ENCODE measurements at regions of chr1 and their contacts with region 1.

Region 1: GRCh38 chr1:225474986-225475820 is 47.4 kb upstream of the LBR start:
- DNase-seq: peak in 32 of 35 experiments; percentile 19 to 84 (median 56)
- ATAC-seq: peak; percentile 71 to 86 (median 76)
- H3K4me3 ChIP-seq: no peak overlapping the region
- H3K4me3 Mint-ChIP-seq: peak overlapping the region in 1 of 3 donors; percentile 80
- H3K27ac ChIP-seq: no peak overlapping the region
- H3K27ac Mint-ChIP-seq: no peak overlapping the region
- H3K4me1 ChIP-seq: peaks cover 14 to 51% of the 10 kb centered on the region in 2 experiments
- H3K4me1 Mint-ChIP-seq: peaks cover 39 to 52% (median 43%) of the 10 kb centered on the region in 3 donors
- H3K27me3 ChIP-seq: no peaks in the 10 kb centered on the region
- H3K27me3 Mint-ChIP-seq: no peaks in the 10 kb centered on the region

Region 2: DNA sequence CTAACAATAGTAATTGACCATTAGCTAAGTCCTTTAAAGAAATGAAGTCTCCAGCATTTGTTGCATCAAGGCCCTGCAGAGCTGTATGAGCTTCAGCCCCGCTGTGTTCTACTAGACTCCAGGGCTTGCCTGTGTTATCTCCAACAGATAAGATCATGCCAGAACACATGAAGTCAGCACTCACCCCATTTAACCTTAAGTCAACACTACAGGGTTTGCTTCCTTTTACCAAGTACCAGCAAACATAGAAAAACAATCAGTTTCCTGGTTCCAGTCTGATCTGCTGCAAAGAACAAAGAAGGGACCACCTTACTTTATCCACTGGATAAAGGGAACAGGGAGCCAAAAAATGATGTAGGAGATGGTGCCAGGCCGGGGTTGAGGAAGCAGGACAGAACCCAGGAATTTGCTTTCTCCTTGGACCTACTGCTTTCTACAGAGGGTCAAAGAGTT is 219.0 kb after region 1 on chr1:
- CTCF ChIA-PET with region 1: no interaction called
- POLR2A ChIA-PET with region 1: interaction called in 1 of 2 experiments, 10 read pairs
- DNase-seq: no peak
- ATAC-seq: no peak
- H3K4me3 ChIP-seq: no peak overlapping the region
- H3K4me3 Mint-ChIP-seq: no peak overlapping the region
- H3K27ac ChIP-seq: no peak overlapping the region
- H3K27ac Mint-ChIP-seq: no peak overlapping the region
- H3K4me1 ChIP-seq: no peaks in the 10 kb centered on the region
- H3K4me1 Mint-ChIP-seq: no peaks in the 10 kb centered on the region
- H3K27me3 ChIP-seq: peaks cover 0 to 11% of the 10 kb centered on the region in 2 experiments
- H3K27me3 Mint-ChIP-seq: peaks cover 5 to 10% of the 10 kb centered on the region in 2 donors

Region 3: DNA sequence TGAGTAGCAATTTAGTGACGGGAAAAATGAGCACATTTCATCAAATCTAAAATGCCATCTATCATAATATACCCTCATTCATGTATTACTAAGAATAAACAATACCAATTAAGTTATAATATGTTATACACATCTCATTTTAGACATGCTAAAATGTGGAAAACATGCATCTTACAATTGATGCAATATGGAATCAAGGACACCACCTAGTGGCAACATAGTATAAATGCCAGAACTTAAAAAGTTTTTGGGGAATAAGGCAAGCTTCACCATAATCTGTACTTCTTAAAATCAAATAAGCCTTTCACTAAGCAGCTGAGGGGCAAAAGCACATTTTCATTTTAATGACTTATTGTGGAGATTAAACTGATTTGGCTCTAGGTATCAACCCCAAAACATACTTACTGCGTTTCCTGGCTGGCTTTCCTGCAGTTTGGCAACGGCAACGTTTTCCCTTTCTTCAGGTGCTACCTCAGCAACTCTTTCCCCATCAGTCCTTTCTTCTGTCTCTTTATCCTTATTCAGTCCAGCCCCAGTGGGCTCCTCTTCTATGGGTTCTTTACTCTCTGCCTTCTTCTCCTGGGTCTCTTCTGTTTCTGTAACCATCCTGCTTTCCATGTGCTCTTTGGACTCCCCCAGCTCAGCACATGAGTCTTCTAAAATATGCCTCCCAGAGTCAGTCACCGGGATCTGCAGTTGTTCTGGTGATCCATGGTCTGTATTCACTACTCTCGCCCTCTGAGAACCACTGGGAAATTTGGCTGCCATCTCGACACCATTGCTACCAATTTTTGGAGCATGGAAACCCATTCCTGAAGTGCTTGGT is 512.5 kb after region 1 on chr1:
- CTCF ChIA-PET with region 1: interaction called, 5 to 13 read pairs
- POLR2A ChIA-PET with region 1: no interaction called
- DNase-seq: peak in 1 of 35 experiments; percentile 66
- ATAC-seq: peak in 2 of 4 experiments; percentile 48 to 61
- H3K4me3 ChIP-seq: no peak overlapping the region
- H3K4me3 Mint-ChIP-seq: no peak overlapping the region
- H3K27ac ChIP-seq: no peak overlapping the region
- H3K27ac Mint-ChIP-seq: peak overlapping the region in 1 of 2 donors; percentile 1
- H3K4me1 ChIP-seq: peaks cover 0 to 6% of the 10 kb centered on the region in 2 experiments
- H3K4me1 Mint-ChIP-seq: peaks cover 28 to 37% (median 34%) of the 10 kb centered on the region in 3 donors
- H3K27me3 ChIP-seq: no peaks in the 10 kb centered on the region
- H3K27me3 Mint-ChIP-seq: no peaks in the 10 kb centered on the region

Region 4: GRCh38 chr1:225999227-225999911 is 524.2 kb after region 1 on chr1 and contains the start of gene SDE2:
- CTCF ChIA-PET with region 1: interaction called in 1 of 2 experiments, 11 read pairs
- POLR2A ChIA-PET with region 1: no interaction called
- DNase-seq: peak; percentile 98 to 100 (median 100)
- ATAC-seq: peak; percentile 80 to 95 (median 90)
- H3K4me3 ChIP-seq: peak within 1 kb of the TSS; percentile 88 to 99
- H3K4me3 Mint-ChIP-seq: peak within 1 kb of the TSS; percentile 92 to 100 (median 100)
- H3K27ac ChIP-seq: peak within 1 kb of the TSS; percentile 99
- H3K27ac Mint-ChIP-seq: peak within 1 kb of the TSS; percentile 100
- H3K4me1 ChIP-seq: peaks cover 61 to 65% of the 10 kb centered on the region in 2 experiments
- H3K4me1 Mint-ChIP-seq: peaks cover 82 to 87% (median 86%) of the 10 kb centered on the region in 3 donors
- H3K27me3 ChIP-seq: no peaks in the 10 kb centered on the region
- H3K27me3 Mint-ChIP-seq: no peaks in the 10 kb centered on the region
- total RNA-seq, gene SDE2: 19.6 to 36.1 (median 21.8) TPM

Measured in T-cell (primary cell).